Activated B cell treated with CpG ODN at 0.5 μM for 24 hours (primary cell): ENCODE measurements at regions of chr1 and their contacts with region 1.

Region 1: GRCh38 chr1:161399257-161399998 is 31.8 kb upstream of the CFAP126 start:
- DNase-seq: peak; percentile 93
- ATAC-seq: peak; percentile 81
- H3K4me3 Mint-ChIP-seq: peak overlapping the region; percentile 95
- H3K27ac Mint-ChIP-seq: peak overlapping the region; percentile 99
- H3K4me1 Mint-ChIP-seq: peaks cover 30% of the 10 kb centered on the region
- H3K27me3 Mint-ChIP-seq: no peaks in the 10 kb centered on the region
- CTCF ChIP-seq: no peak

Region 2: DNA sequence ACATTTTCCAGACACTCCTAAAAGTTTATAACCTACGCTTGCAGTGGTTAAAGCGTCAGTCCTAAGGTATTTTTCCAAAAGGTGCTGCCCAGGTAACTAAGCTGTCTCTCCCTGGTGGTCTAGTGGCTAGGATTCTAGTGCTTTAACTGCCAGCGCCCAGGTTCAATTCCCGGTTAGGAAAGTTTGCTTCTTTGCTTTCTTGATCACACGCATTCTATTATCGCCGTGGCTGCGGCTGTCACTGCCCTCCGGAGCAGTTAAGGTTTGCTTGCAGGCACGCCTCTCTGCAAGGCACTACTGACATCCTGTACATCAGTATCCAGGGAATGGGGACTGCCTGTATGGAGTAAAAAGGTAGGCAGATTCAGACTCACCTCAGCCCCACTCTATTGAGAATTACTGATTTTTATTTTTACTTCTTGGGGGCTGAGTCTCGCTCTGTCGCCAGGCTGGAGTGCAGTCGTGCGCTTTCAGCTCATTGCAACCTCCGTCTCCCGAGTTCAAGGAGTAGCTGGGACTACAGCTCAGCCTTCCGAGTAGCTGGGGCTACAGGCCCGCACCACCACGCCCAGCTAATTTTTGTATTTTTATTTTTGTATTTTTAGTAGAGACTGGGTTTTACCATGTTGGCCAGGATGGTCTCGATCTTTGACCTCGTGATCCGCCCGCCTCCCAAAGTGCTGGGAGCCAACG is 21.5 kb after region 1 on chr1:
- CTCF ChIA-PET with region 1: no interaction called
- POLR2A ChIA-PET with region 1: interaction called, 3 read pairs
- intact Hi-C with region 1: loop called (anchors 1 kb)
- DNase-seq: no peak
- ATAC-seq: no peak
- H3K4me3 Mint-ChIP-seq: peak overlapping the region; percentile 85
- H3K27ac Mint-ChIP-seq: no peak overlapping the region
- H3K4me1 Mint-ChIP-seq: peaks cover 5% of the 10 kb centered on the region
- H3K27me3 Mint-ChIP-seq: peaks cover 2% of the 10 kb centered on the region
- CTCF ChIP-seq: no peak

Region 3: GRCh38 chr1:161439280-161440232 is 40.1 kb after region 1 on chr1:
- CTCF ChIA-PET with region 1: interaction called, 6 read pairs
- POLR2A ChIA-PET with region 1: interaction called, 8 read pairs
- intact Hi-C with region 1: loop called (anchors 5 kb)
- DNase-seq: peak; percentile 29
- ATAC-seq: no peak
- H3K4me3 Mint-ChIP-seq: peak overlapping the region; percentile 82
- H3K27ac Mint-ChIP-seq: peak overlapping the region; percentile 12
- H3K4me1 Mint-ChIP-seq: peaks cover 15% of the 10 kb centered on the region
- H3K27me3 Mint-ChIP-seq: peaks cover 18% of the 10 kb centered on the region
- CTCF ChIP-seq: no peak

Region 4: GRCh38 chr1:161531986-161532643 is 132.7 kb after region 1 on chr1:
- CTCF ChIA-PET with region 1: no interaction called
- POLR2A ChIA-PET with region 1: no interaction called
- intact Hi-C with region 1: loop called (anchors 1 kb)
- DNase-seq: no peak
- ATAC-seq: no peak
- H3K4me3 Mint-ChIP-seq: peak overlapping the region; percentile 35
- H3K27ac Mint-ChIP-seq: no peak overlapping the region
- H3K4me1 Mint-ChIP-seq: peaks cover 22% of the 10 kb centered on the region
- H3K27me3 Mint-ChIP-seq: peaks cover 5% of the 10 kb centered on the region
- CTCF ChIP-seq: no peak

Region 5: DNA sequence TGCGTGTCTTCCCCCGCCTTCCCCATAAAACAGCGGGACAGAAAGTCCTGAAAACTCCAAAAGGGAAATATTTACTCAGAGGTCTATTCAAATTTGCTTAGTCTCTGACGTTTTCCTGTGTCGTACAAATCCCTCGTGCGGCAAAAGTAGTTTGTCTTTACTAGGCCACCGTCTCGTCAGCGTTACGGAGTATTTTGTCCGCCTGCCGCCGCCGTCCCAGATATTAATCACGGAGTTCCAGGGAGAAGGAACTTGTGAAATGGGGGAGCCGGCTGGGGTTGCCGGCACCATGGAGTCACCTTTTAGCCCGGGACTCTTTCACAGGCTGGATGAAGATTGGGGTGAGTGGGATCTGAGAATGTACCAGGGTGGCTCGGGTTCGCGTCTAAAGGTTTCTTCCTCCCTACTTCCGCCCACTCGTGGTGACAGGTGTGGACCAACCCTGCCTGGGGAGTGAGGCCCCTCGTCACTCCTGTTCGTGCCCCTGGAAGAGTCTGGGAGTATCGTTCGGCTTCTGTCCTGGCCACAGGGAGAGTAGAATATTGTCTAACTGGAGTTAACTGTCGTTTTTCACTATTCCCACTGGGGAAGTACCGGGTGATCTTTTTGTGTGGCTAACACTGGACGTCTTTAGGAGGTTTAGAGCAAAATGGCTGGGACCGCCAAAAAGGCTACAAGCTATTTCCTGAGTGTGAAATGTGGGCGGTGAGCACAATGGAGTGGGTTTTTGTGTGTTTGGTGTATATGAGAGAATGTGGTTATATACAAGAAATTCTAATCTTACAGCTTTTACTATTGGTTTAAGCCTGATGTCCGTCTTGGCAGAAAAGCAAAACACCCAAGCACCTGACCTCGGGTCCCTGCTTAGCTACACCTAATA is 366.9 kb after region 1 on chr1 and contains the start of gene ATF6:
- CTCF ChIA-PET with region 1: no interaction called
- POLR2A ChIA-PET with region 1: no interaction called
- intact Hi-C with region 1: loop called (anchors 5 kb)
- DNase-seq: peak; percentile 71
- ATAC-seq: peak; percentile 78
- H3K4me3 Mint-ChIP-seq: peak within 1 kb of the TSS; percentile 99
- H3K27ac Mint-ChIP-seq: peak within 1 kb of the TSS; percentile 95
- H3K4me1 Mint-ChIP-seq: peaks cover 46% of the 10 kb centered on the region
- H3K27me3 Mint-ChIP-seq: no peaks in the 10 kb centered on the region
- CTCF ChIP-seq: no peak
- total RNA-seq, gene ATF6: 23.7 and 24.6 TPM in 2 replicates